Cardiac septum (tissue), 1 donor: ENCODE measurements at regions of chr2 and their contacts with region 1.

Region 1: GRCh38 chr2:190382851-190383250 is 25.3 kb upstream of the MFSD6 start:
- DNase-seq: no peak

Region 2: DNA sequence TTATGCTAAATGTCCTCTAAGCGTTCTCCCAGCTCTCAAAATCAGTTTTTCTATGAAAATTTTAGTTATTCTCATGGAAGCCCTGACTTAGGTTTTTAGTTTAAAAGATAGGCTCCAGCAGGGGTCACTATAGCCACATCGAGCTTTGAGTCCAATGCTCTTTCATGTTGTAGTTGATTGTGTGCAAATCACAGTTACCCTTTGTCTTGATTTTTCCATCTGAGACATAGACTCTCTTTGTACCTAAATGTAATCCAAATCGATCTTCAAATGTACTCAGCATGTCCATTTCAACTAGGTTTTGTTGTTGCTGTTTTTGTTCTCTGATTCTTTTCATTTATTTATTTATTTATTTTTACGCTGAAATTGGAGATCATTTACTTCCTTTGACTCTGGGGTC is 293.9 kb before region 1 on chr2:
- intact Hi-C with region 1: no loop called
- DNase-seq: no peak

Region 3: GRCh38 chr2:190511104-190511503 is 128.3 kb after region 1 on chr2:
- intact Hi-C with region 1: loop called (anchors 2 kb)
- DNase-seq: no peak

Region 4: GRCh38 chr2:190781604-190782198 is 398.9 kb after region 1 on chr2:
- intact Hi-C with region 1: loop called (anchors 10 kb)
- DNase-seq: no peak

Region 5: DNA sequence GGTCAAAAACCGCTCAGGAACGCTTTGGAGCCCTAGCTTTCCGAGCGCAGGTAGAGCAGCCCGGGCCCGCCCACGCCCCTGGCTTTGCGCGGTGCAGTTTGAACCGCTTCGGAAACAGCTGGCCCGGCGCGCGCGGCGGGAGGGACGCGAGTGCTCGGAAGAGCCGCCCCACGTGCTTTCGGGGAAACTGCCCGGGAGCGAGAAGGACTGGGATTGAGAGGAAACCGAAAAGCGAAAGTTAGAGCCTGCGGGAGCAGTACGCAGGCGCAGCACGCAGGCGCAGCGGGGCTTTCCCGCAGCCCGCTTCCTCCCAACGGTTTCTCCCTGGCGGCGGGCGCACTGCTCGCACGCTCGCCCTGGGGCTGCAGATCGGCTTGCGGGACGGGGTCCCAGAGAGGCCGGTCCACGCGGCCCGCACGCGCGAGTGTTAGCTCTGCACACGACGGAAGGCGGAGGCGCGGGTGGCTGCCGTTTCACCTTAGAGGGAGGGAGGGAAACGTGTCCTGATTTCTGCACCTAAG is 637.4 kb after region 1 on chr2:
- intact Hi-C with region 1: no loop called
- DNase-seq: peak; percentile 96